Activated CD4-positive, alpha-beta T cell treated with anti-CD3 and anti-CD28 coated beads, Interleukin-2, amount 10 ng/mL, durations not matched to agents 24 days and 14 days (primary cell): ENCODE measurements at regions of chr15 and their contacts with region 1.

Region 1: DNA sequence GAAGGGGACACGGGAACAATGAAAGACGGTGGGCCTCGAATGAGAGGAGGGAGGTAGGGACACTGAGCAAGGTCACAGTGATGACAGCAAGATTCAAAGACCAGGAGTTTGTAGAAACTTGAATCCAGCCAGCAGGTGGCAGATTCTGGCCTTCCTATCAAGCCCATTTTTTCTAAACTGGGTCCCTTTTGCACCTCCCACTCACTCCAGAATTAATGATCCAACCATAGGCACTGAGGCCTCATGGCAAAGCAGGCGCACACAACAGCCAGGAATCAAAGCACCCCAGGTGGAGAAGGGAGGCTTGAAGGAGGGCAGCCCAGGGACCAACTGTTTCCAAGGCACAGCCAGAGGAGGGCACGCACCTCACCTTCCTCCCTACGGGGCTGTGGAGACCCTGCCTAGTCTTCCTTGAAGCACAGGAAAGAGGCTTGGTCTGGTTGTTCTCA is 90.2 kb downstream of the ANP32A start:
- DNase-seq: peak; percentile 66
- H3K4me3 Mint-ChIP-seq: no peak overlapping the region
- H3K27ac Mint-ChIP-seq: no peak overlapping the region
- H3K4me1 Mint-ChIP-seq: peaks cover 4% of the 10 kb centered on the region
- H3K27me3 Mint-ChIP-seq: peaks cover 8% of the 10 kb centered on the region

Region 2: DNA sequence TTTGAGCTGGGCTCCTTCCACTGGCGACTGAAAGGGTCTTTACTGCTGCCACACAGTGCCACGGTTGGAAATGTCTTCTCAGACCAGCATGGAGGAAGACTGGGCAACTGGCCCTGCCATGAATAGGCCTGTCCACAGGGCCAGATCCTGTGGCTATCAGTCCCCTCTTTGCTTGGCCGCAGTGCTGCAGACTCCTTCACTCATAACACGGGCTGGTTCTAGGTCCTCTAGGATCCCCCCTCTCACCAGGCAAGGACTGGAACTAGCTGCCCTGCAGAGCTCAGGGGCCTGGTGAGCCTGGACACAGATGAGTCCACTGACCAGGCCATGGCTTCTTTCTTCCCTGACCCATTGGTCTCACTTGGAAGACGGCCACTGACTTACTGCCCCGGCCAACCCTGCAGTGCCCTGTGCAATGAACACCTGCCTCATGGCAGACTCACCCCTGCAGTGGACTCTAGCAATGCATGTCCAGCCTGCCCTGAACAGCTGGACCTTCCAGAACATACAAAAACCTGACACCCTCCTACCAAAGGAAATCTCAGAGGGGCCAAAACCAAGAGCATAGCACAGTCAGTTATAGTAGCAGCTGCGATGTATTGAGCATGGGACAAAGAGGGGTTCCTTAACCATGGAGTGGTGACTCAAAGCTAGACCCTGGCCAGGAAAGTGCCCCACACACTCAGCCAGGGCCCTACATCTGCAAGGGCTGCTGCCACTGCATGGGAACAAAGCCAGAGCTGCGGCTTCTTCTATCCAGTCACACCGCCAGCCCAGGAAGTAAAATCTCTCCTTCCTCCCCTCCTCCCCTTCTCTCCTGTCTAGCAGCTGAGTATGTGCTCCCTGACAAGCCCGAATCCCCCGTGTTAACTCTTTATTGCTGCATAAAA is 226.5 kb before region 1 on chr15:
- intact Hi-C with region 1: no loop called
- DNase-seq: no peak
- H3K4me3 Mint-ChIP-seq: peak overlapping the region; percentile 29
- H3K27ac Mint-ChIP-seq: no peak overlapping the region
- H3K4me1 Mint-ChIP-seq: peaks cover 8% of the 10 kb centered on the region
- H3K27me3 Mint-ChIP-seq: peaks cover 15% of the 10 kb centered on the region

Region 3: GRCh38 chr15:68829068-68829467 is 98.6 kb after region 1 on chr15:
- intact Hi-C with region 1: loop called (anchors 2 kb)
- DNase-seq: peak; percentile 76
- H3K4me3 Mint-ChIP-seq: no peak overlapping the region
- H3K27ac Mint-ChIP-seq: no peak overlapping the region
- H3K4me1 Mint-ChIP-seq: peaks cover 15% of the 10 kb centered on the region
- H3K27me3 Mint-ChIP-seq: peaks cover 8% of the 10 kb centered on the region

Region 4: GRCh38 chr15:68875377-68876116 is 145.1 kb after region 1 on chr15:
- intact Hi-C with region 1: loop called (anchors 1 kb)
- DNase-seq: peak; percentile 96
- H3K4me3 Mint-ChIP-seq: peak overlapping the region; percentile 53
- H3K27ac Mint-ChIP-seq: no peak overlapping the region
- H3K4me1 Mint-ChIP-seq: peaks cover 7% of the 10 kb centered on the region
- H3K27me3 Mint-ChIP-seq: peaks cover 35% of the 10 kb centered on the region